Activated CD8-positive, alpha-beta memory T cell treated with anti-CD3 and anti-CD28 coated beads, Interleukin-2, amount 10 ng/mL, durations not matched to agents 7 days and 5 days (primary cell): ENCODE measurements at regions of chr11 and their contacts with region 1.

Region 1: DNA sequence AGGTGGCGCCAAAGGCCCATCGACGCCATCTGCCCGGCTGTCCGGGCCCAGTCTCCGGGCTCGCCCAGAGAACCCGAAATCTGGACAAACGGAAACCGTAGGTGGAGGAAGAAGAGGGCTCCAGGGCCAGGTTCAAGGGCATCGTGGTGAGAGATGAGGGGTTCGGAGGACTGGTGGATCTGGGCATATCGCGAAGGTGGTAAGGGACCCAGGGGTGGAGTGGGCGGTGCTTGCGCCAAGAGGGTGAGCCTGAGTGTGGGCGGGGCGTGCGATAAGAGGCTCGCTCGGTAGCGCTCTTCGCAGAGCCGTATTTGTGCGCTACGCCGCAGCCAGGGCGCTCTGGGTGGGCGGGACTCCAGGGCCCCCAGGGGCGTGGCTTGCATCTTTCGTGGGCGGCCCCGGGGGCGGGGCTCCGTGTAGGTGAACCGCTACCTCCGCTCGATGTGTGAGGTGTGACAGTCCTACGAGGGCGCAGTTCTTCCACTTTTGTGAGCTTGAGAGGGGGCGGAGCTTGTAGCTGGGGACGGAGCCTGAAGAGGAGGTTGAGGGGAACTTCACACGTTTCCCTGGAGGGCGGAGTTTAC is 4.8 kb downstream of the CD248 start:
- DNase-seq: peak; percentile 97
- ATAC-seq: peak; percentile 72
- H3K4me3 Mint-ChIP-seq: peak overlapping the region; percentile 89
- H3K27ac Mint-ChIP-seq: peak overlapping the region; percentile 98
- H3K4me1 Mint-ChIP-seq: peaks cover 34% of the 10 kb centered on the region
- H3K27me3 Mint-ChIP-seq: peaks cover 5% of the 10 kb centered on the region

Region 2: GRCh38 chr11:66222358-66223149 is 89.5 kb before region 1 on chr11:
- CTCF ChIA-PET with region 1: interaction called, 12 read pairs
- DNase-seq: peak; percentile 95
- ATAC-seq: peak; percentile 94
- H3K4me3 Mint-ChIP-seq: no peak overlapping the region
- H3K27ac Mint-ChIP-seq: peak overlapping the region; percentile 78
- H3K4me1 Mint-ChIP-seq: peaks cover 28% of the 10 kb centered on the region
- H3K27me3 Mint-ChIP-seq: no peaks in the 10 kb centered on the region

Region 3: GRCh38 chr11:66288671-66289547 is 23.1 kb before region 1 on chr11 and contains the start of gene YIF1A:
- CTCF ChIA-PET with region 1: interaction called, 31 read pairs
- DNase-seq: peak; percentile 100
- ATAC-seq: peak; percentile 96
- H3K4me3 Mint-ChIP-seq: peak within 1 kb of the TSS; percentile 91
- H3K27ac Mint-ChIP-seq: peak within 1 kb of the TSS; percentile 89
- H3K4me1 Mint-ChIP-seq: peaks cover 41% of the 10 kb centered on the region
- H3K27me3 Mint-ChIP-seq: peaks cover 30% of the 10 kb centered on the region
- total RNA-seq, gene YIF1A: 56.5 to 73.9 TPM

Region 4: GRCh38 chr11:66328307-66329144 is 16.5 kb after region 1 on chr11:
- CTCF ChIA-PET with region 1: interaction called, 174 read pairs
- DNase-seq: peak; percentile 89
- ATAC-seq: peak; percentile 85
- H3K4me3 Mint-ChIP-seq: peak overlapping the region; percentile 10
- H3K27ac Mint-ChIP-seq: peak overlapping the region; percentile 81
- H3K4me1 Mint-ChIP-seq: peaks cover 51% of the 10 kb centered on the region
- H3K27me3 Mint-ChIP-seq: no peaks in the 10 kb centered on the region

Region 5: DNA sequence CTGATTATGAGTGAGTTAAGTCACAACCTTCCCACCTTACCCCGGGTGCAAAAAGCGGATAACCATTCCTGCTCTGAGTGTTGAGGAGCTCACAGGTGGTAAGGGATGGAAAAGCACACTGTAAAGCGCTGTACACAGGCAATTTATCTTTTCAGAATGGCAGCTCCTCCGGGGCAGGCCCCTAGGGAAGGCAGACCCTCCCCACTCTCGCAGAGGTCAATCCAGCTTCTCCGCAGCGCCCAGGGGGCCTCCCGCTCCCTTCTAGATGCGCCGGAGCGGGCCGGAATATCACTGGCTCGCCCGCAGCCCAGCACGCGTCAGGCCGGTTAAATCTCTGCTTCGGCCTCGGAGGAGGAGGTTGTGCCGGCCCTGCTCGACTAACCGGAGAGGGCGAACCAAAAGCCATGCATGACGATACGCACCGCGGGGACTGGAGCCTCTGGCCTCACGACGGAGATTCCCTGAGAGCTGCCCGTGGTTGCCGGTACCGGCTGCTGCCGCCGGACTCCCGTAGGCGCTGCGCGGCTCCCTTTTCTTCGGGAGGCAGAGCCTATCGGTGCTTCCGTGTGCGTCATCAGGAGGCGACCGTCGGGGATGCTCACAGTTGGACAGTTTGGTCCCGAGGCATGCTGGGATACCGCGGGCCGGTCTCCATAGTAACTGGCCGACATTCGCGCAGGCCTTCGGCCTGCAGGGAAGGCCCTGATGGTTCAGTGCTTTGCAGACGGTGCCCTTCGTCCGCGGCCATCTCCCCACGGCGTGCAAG is 32.7 kb after region 1 on chr11 and contains the start of gene BRMS1:
- CTCF ChIA-PET with region 1: interaction called, 72 read pairs
- DNase-seq: peak; percentile 99
- ATAC-seq: peak; percentile 81
- H3K4me3 Mint-ChIP-seq: peak within 1 kb of the TSS; percentile 95
- H3K27ac Mint-ChIP-seq: peak within 1 kb of the TSS; percentile 95
- H3K4me1 Mint-ChIP-seq: peaks cover 47% of the 10 kb centered on the region
- H3K27me3 Mint-ChIP-seq: no peaks in the 10 kb centered on the region
- total RNA-seq, gene BRMS1: 55.3 to 56.8 TPM

Region 6: DNA sequence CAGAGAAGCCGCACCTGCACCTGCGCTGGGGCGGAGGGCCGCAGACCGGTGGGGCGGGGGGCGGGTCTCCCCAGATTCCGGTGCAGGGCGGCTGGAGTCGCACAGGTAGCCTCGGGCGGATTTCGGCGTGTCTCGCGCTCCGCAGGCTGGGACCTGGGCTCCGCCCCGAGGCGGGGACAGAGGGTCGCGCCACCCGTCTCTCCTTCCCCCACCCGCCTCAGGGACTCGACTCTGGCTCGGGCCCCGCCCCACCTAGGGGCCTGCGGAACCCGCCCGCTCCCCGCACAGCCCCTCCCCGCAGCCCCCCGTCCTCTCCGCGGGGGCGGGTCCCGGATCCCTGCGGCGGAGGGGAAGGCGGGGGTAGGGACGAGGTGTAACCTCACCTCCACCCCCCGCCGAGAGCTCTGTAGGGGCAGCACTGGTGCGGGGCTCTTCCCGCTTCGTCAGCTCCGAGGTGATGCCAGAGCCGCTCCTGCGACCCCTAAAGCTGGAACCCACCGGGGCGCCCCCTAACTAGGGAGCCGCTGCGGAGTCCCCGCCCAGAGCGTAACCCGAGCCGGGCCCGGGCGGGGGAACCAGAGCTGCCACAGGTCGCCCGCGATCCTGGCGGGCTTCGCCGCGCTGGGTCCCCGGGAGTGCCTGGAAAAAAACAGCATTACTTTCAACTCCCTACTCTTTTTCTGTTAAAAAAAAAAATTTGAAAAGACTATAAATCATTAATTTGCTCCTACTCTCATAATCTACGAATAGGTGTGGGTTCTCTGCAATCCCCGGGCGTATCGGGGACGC is 59.8 kb after region 1 on chr11 and contains the start of gene SLC29A2:
- CTCF ChIA-PET with region 1: interaction called, 10 read pairs
- DNase-seq: peak; percentile 89
- ATAC-seq: peak; percentile 89
- H3K4me3 Mint-ChIP-seq: peak within 1 kb of the TSS; percentile 76
- H3K27ac Mint-ChIP-seq: peak within 1 kb of the TSS; percentile 92
- H3K4me1 Mint-ChIP-seq: peaks cover 19% of the 10 kb centered on the region
- H3K27me3 Mint-ChIP-seq: peaks cover 6% of the 10 kb centered on the region
- total RNA-seq, gene SLC29A2: 7.6 to 10.1 TPM